Activated CD4-positive, alpha-beta T cell treated with anti-CD3 and anti-CD28 coated beads for 36 hours (primary cell): ENCODE measurements at regions of chr20 and their contacts with region 1.

Region 1: GRCh38 chr20:53149148-53149889 is 177.2 kb downstream of the TSHZ2 start:
- DNase-seq: no peak
- ATAC-seq: no peak
- H3K4me3 Mint-ChIP-seq: no peak overlapping the region
- H3K27ac Mint-ChIP-seq: peak overlapping the region; percentile 76
- H3K4me1 Mint-ChIP-seq: peaks cover 66% of the 10 kb centered on the region
- H3K27me3 Mint-ChIP-seq: peaks cover 3% of the 10 kb centered on the region

Region 2: GRCh38 chr20:52305858-52306257 is 843.5 kb before region 1 on chr20:
- CTCF ChIA-PET with region 1: interaction called, 3 read pairs
- POLR2A ChIA-PET with region 1: no interaction called
- intact Hi-C with region 1: loop called (anchors 5 kb)
- DNase-seq: peak; percentile 49
- ATAC-seq: peak; percentile 87
- H3K4me3 Mint-ChIP-seq: no peak overlapping the region
- H3K27ac Mint-ChIP-seq: peak overlapping the region; percentile 45
- H3K4me1 Mint-ChIP-seq: peaks cover 56% of the 10 kb centered on the region
- H3K27me3 Mint-ChIP-seq: no peaks in the 10 kb centered on the region

Region 3: DNA sequence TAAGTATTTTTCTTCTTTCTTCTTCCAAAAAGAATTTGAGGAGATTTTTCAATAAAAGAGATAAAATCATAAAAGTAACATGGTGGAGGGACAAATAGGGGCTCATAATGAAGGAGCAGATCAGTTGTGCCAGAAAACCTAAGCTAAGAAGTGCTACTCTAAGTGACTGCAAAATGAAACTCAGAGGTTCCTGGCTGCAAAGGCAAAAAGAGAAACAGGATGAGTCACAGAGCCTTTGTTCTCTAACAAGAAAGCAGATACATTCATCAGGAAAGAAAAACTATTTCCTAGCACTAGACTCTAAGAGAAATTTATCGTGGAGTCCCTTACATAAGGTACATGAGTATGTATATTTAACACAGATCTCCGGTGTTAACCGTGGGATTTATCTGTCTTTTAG is 127.4 kb before region 1 on chr20:
- CTCF ChIA-PET with region 1: no interaction called
- POLR2A ChIA-PET with region 1: interaction called, 4 read pairs
- intact Hi-C with region 1: loop called (anchors 1 to 2 kb)
- DNase-seq: peak; percentile 22
- ATAC-seq: peak; percentile 84
- H3K4me3 Mint-ChIP-seq: peak overlapping the region; percentile 41
- H3K27ac Mint-ChIP-seq: peak overlapping the region; percentile 97
- H3K4me1 Mint-ChIP-seq: peaks cover 78% of the 10 kb centered on the region
- H3K27me3 Mint-ChIP-seq: no peaks in the 10 kb centered on the region

Region 4: GRCh38 chr20:53028337-53029007 is 120.8 kb before region 1 on chr20:
- CTCF ChIA-PET with region 1: no interaction called
- POLR2A ChIA-PET with region 1: interaction called, 4 read pairs
- intact Hi-C with region 1: loop called (anchors 1 to 2 kb)
- DNase-seq: peak; percentile 61
- ATAC-seq: peak; percentile 57
- H3K4me3 Mint-ChIP-seq: no peak overlapping the region
- H3K27ac Mint-ChIP-seq: peak overlapping the region; percentile 70
- H3K4me1 Mint-ChIP-seq: peaks cover 63% of the 10 kb centered on the region
- H3K27me3 Mint-ChIP-seq: no peaks in the 10 kb centered on the region

Region 5: GRCh38 chr20:53070706-53071392 is 78.5 kb before region 1 on chr20:
- CTCF ChIA-PET with region 1: interaction called, 5 read pairs
- POLR2A ChIA-PET with region 1: interaction called, 4 read pairs
- intact Hi-C with region 1: loop called (anchors 1 kb)
- DNase-seq: peak; percentile 64
- ATAC-seq: peak; percentile 77
- H3K4me3 Mint-ChIP-seq: peak overlapping the region; percentile 24
- H3K27ac Mint-ChIP-seq: peak overlapping the region; percentile 93
- H3K4me1 Mint-ChIP-seq: peaks cover 54% of the 10 kb centered on the region
- H3K27me3 Mint-ChIP-seq: peaks cover 3% of the 10 kb centered on the region

Region 6: GRCh38 chr20:53077373-53078205 is 71.7 kb before region 1 on chr20:
- CTCF ChIA-PET with region 1: interaction called, 3 read pairs
- POLR2A ChIA-PET with region 1: interaction called, 11 read pairs
- intact Hi-C with region 1: loop called (anchors 1 kb)
- DNase-seq: peak; percentile 56
- ATAC-seq: peak; percentile 80
- H3K4me3 Mint-ChIP-seq: no peak overlapping the region
- H3K27ac Mint-ChIP-seq: no peak overlapping the region
- H3K4me1 Mint-ChIP-seq: peaks cover 44% of the 10 kb centered on the region
- H3K27me3 Mint-ChIP-seq: peaks cover 3% of the 10 kb centered on the region